Right cardiac atrium (tissue), 5 donors: ENCODE measurements at regions of chr14 and their contacts with region 1.

Region 1: GRCh38 chr14:96275177-96276112 is 19.4 kb downstream of the BDKRB1 start:
- DNase-seq: peak; percentile 70 to 86 (median 86)
- ATAC-seq: peak; percentile 55 to 58
- H3K4me3 ChIP-seq: no peak overlapping the region
- H3K27ac ChIP-seq: no peak overlapping the region
- H3K4me1 ChIP-seq: no peaks in the 10 kb centered on the region
- H3K27me3 ChIP-seq: no peaks in the 10 kb centered on the region

Region 2: GRCh38 chr14:95561001-95561412 is 714.4 kb before region 1 on chr14:
- intact Hi-C with region 1: loop called in 3 of 4 experiments (anchors 5 to 10 kb)
- DNase-seq: peak; percentile 75 to 93 (median 83)
- ATAC-seq: peak; percentile 76 to 87
- H3K4me3 ChIP-seq: no peak overlapping the region
- H3K27ac ChIP-seq: no peak overlapping the region
- H3K4me1 ChIP-seq: no peaks in the 10 kb centered on the region
- H3K27me3 ChIP-seq: no peaks in the 10 kb centered on the region

Region 3: GRCh38 chr14:96001866-96002497 is 273.5 kb before region 1 on chr14:
- intact Hi-C with region 1: loop called (anchors 5 to 10 kb)
- DNase-seq: no peak
- ATAC-seq: no peak
- H3K4me3 ChIP-seq: no peak overlapping the region
- H3K27ac ChIP-seq: no peak overlapping the region
- H3K4me1 ChIP-seq: no peaks in the 10 kb centered on the region
- H3K27me3 ChIP-seq: no peaks in the 10 kb centered on the region

Region 4: GRCh38 chr14:96100161-96101029 is 175.1 kb before region 1 on chr14:
- intact Hi-C with region 1: loop called (anchors 1 to 5 kb)
- DNase-seq: peak; percentile 70 to 87 (median 79)
- ATAC-seq: peak; percentile 54 to 64
- H3K4me3 ChIP-seq: no peak overlapping the region
- H3K27ac ChIP-seq: no peak overlapping the region
- H3K4me1 ChIP-seq: no peaks in the 10 kb centered on the region
- H3K27me3 ChIP-seq: no peaks in the 10 kb centered on the region

Region 5: DNA sequence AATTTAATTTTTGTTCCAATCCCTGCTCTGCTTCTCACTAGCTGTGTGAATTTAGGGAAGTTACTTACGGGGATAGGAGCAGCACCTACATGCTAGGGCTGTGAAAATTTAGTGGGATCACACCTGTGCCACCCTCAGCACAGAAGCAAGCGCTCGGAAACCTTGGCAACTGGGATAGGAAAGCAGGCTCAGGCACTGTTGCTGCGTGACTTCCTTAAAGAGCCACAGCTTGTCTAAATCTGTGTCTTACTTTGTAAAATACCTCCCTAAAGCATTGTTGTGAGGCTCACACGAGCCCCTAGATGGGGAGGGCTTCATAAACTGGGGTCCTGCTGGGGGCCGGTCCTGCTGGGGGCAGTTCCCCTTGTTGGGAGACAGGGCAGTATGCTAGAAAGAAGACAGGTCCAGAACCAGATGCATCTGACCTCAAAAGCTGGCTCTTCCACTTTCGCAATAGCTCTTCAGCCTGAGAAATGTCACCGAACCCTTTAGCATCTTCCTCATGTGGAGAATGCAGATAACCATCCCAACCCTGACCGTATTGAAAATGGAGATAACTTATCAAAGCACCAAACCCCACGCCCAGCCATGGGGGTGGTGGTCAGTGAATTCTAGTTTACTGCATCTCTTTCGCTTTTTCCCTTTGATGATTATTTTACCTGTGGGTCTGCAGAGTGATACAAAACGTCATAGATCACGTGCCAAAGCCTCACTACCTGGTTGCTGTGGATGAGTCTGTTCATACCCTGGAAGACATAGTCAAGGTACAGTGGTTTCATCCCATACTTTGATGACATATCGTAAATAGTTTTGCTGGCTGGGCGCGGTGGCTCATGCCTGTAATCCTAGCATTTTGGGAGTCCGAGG is 170.6 kb after region 1 on chr14:
- intact Hi-C with region 1: no loop called
- DNase-seq: no peak
- ATAC-seq: no peak
- H3K4me3 ChIP-seq: no peak overlapping the region
- H3K27ac ChIP-seq: no peak overlapping the region
- H3K4me1 ChIP-seq: no peaks in the 10 kb centered on the region
- H3K27me3 ChIP-seq: no peaks in the 10 kb centered on the region

Region 6: DNA sequence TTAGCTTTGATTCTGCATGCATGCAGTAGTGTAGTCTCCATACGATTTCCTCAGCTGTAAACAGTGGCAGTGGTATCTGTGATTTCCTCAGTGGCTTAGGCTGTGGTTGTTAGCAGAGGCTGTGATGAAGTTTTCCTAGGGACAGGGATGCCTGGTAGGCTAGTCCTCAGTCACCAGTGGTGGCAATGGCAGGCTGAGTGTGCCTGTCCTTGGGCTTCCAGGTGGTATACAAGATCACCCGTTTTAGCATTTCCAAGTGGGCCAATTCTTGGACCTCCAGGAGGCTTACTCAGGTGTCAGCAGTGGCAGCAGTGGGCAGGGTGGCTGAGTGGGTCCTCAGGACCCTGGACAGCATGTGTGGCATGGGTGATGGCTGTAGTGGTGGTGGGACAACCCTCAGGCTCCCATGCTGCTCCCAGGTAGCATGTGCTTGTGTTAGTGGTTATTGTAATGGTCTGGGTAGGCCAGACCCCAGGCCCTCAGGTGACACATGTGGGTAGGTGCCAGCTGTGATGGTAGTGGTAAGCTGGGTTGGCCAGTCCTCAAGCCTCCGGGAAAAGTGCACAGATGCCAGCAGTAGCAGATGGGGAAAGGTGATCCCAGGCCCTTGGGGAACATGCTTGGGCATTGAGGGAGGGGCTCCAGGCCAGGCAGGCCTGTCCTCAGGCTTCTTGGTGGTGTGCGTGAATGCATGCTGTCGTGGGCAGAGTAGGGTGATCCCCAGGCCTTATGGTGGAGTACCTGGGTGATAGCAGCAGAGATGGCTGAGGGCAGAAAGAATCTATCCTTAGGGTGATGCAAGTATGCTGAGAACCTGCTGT is 373.3 kb after region 1 on chr14:
- intact Hi-C with region 1: no loop called
- DNase-seq: no peak
- ATAC-seq: peak in 1 of 2 donors; percentile 26
- H3K4me3 ChIP-seq: no peak overlapping the region
- H3K27ac ChIP-seq: no peak overlapping the region
- H3K4me1 ChIP-seq: no peaks in the 10 kb centered on the region
- H3K27me3 ChIP-seq: no peaks in the 10 kb centered on the region